ENCODE measurements at regions of chr12 and their contacts with region 1.

Region 1: DNA sequence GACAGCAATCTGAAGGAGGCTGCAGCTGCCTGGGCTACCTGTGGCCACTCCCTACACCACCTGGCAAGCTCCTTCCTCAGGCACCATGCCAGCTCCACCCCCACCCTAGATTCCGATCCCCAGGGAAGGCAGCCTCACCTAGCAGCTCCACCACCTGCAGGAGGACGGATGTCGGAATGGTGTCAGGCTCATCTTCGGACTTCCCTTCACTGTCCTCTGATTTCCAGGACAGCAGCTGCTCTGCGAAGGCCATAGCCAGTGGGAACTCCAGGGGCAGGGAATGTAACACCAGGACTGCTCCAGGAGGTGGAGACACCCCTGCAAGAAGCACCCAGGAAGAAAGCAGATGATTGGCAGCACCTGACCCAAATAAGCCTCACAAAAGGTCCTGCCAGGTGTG is 65.3 kb downstream of the TRAFD1 start:
- DNase-seq: peak; percentile 66
- H3K4me3 ChIP-seq: no peak overlapping the region
- H3K27ac ChIP-seq: no peak overlapping the region
- H3K4me1 ChIP-seq: peaks cover 29% of the 10 kb centered on the region
- H3K27me3 ChIP-seq: no peaks in the 10 kb centered on the region
- CTCF ChIP-seq: peak in 1 of 2 donors; percentile 30

Region 2: GRCh38 chr12:112096667-112097066 is 94.0 kb before region 1 on chr12:
- CTCF ChIA-PET with region 1: no interaction called
- dilution Hi-C with region 1: loop called (anchors 5 kb)
- in situ Hi-C with region 1: no loop called
- intact Hi-C with region 1: no loop called
- DNase-seq: peak; percentile 86
- H3K4me3 ChIP-seq: no peak overlapping the region
- H3K27ac ChIP-seq: no peak overlapping the region
- H3K4me1 ChIP-seq: peaks cover 14% of the 10 kb centered on the region
- H3K27me3 ChIP-seq: no peaks in the 10 kb centered on the region
- CTCF ChIP-seq: no peak